CD4-positive, alpha-beta memory T cell (primary cell): ENCODE measurements at regions of chr1 and their contacts with region 1.

Region 1: GRCh38 chr1:175338387-175339135 is 146.0 kb upstream of the KIAA0040 start:
- DNase-seq: peak; percentile 27 to 61 (median 45)
- H3K4me3 ChIP-seq: no peak overlapping the region
- H3K4me3 Mint-ChIP-seq: no peak overlapping the region
- H3K27ac ChIP-seq: no peak overlapping the region
- H3K27ac Mint-ChIP-seq: no peak overlapping the region
- H3K4me1 ChIP-seq: no peaks in the 10 kb centered on the region
- H3K4me1 Mint-ChIP-seq: peaks cover 0 to 6% (median 4%) of the 10 kb centered on the region in 4 donors
- H3K27me3 ChIP-seq: no peaks in the 10 kb centered on the region
- H3K27me3 Mint-ChIP-seq: peaks cover 18 to 26% of the 10 kb centered on the region in 2 donors

Region 2: DNA sequence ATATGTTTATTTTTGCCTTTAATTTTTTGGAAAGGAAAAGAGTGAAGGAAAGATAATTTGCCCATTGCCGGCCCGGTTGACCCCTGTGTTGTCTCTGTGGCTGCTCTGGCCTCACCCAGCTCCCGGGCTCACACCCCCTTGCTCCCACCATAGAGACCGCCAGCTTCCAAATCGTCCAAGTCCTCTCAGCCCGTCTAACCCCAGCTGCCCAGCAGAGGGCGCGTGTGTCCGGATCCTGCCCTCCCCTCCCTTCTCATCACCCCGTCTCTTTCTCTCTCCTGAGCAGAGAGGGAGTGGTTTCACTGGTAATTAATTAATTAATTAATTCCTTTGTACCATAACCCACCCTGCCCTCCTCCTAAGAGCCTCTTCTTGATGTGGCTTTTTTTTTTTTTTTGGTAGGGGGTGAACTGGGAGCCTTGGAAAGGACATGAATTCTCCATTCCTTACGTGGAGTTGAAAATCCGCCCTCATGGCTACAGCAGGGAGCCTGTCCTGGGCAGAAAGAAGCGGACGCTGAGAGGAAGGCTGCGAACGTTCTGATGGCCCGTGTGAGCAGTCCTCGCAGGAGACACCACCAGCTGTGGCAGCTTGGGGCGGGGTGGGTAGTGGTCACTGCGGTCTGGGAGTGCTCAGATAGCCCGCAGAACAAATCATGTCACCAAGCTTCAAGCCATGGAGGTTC is 191.9 kb before region 1 on chr1:
- CTCF ChIA-PET with region 1: interaction called, 22 read pairs
- POLR2A ChIA-PET with region 1: no interaction called
- intact Hi-C with region 1: no loop called
- DNase-seq: peak; percentile 47 to 58 (median 54)
- H3K4me3 ChIP-seq: no peak overlapping the region
- H3K4me3 Mint-ChIP-seq: peak overlapping the region in 1 of 8 donors; percentile 22
- H3K27ac ChIP-seq: no peak overlapping the region
- H3K27ac Mint-ChIP-seq: no peak overlapping the region
- H3K4me1 ChIP-seq: peaks cover 2% of the 10 kb centered on the region
- H3K4me1 Mint-ChIP-seq: peaks cover 0 to 13% (median 7%) of the 10 kb centered on the region in 4 donors
- H3K27me3 ChIP-seq: no peaks in the 10 kb centered on the region
- H3K27me3 Mint-ChIP-seq: peaks cover 17% of the 10 kb centered on the region in 2 donors

Region 3: DNA sequence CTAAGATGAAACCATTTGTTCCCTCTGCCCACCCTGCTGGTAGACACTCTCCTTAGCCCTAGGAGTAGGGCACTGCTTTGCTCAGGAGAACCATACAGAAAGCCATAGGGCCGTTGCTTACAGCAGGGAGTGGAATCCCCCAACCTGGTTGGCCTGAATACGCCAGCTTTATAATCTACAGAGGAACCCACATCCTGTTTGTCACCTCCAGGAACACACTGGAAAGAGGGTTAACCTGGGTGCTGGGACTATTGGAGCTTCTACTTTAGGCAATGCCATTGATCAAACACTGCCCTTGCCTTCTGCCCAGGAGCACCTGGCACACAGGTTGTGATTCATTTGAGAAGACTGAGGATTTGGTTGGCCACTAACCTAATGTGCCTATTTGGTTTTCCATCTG is 280.0 kb after region 1 on chr1:
- CTCF ChIA-PET with region 1: no interaction called
- POLR2A ChIA-PET with region 1: no interaction called
- intact Hi-C with region 1: no loop called
- DNase-seq: no peak
- H3K4me3 ChIP-seq: no peak overlapping the region
- H3K4me3 Mint-ChIP-seq: no peak overlapping the region
- H3K27ac ChIP-seq: no peak overlapping the region
- H3K27ac Mint-ChIP-seq: no peak overlapping the region
- H3K4me1 ChIP-seq: no peaks in the 10 kb centered on the region
- H3K4me1 Mint-ChIP-seq: peaks cover 0 to 8% (median 5%) of the 10 kb centered on the region in 4 donors
- H3K27me3 ChIP-seq: no peaks in the 10 kb centered on the region
- H3K27me3 Mint-ChIP-seq: peaks cover 3 to 7% of the 10 kb centered on the region in 2 donors